Activated B cell treated with CpG ODN at 0.5 μM for 24 hours (primary cell): ENCODE measurements at regions of chr2 and their contacts with region 1.

Region 1: GRCh38 chr2:10302479-10303180 is at the start of gene HPCAL1:
- DNase-seq: peak; percentile 87
- ATAC-seq: peak; percentile 84
- H3K4me3 Mint-ChIP-seq: peak within 1 kb of the TSS; percentile 96
- H3K27ac Mint-ChIP-seq: peak within 1 kb of the TSS; percentile 80
- H3K4me1 Mint-ChIP-seq: peaks cover 58% of the 10 kb centered on the region
- H3K27me3 Mint-ChIP-seq: no peaks in the 10 kb centered on the region
- CTCF ChIP-seq: no peak
- total RNA-seq, gene HPCAL1: 15.2 and 15.9 TPM in 2 replicates

Region 2: DNA sequence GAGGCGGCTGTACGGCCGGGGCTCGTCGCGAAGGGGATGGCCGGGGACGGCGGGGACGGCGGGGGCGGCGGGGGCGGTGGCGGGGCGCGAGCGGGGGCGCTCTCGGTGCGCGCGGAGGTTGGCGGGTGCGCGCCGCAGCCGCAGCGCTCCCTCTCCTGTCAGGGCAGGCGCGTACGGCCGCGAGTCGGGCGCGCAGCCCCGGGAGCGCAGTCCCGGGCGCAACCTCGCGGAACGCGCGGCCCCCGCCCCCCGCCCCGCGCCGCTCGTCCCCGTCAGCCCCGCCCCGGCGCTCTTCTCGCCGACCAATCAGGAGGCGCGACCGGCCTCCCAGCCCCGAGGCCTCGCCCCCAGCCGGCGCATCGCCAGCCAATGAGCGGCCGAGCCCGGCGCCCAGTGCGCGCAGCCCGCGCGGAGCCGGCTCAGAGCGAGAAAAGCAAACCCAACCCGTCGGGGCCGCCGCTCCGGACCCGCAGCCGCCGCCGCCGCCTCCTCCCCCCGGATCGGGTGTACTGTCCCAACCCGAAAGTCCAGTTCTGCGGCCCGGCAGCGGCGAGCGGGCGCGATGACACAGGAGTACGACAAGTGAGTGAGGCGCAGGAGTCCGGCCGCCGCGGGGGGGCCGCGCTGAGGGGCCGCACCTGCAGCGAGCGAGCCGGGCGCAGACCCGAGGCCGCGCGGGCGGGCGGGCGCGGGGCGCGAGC is 351.2 kb before region 1 on chr2 and contains the start of gene GRHL1:
- CTCF ChIA-PET with region 1: no interaction called
- POLR2A ChIA-PET with region 1: no interaction called
- intact Hi-C with region 1: loop called (anchors 2 kb)
- DNase-seq: peak; percentile 89
- ATAC-seq: peak; percentile 96
- H3K4me3 Mint-ChIP-seq: peak within 1 kb of the TSS; percentile 84
- H3K27ac Mint-ChIP-seq: peak within 1 kb of the TSS; percentile 65
- H3K4me1 Mint-ChIP-seq: peaks cover 14% of the 10 kb centered on the region
- H3K27me3 Mint-ChIP-seq: peaks cover 37% of the 10 kb centered on the region
- CTCF ChIP-seq: no peak
- total RNA-seq, gene GRHL1: 0.39 and 0.95 TPM in 2 replicates

Region 3: GRCh38 chr2:10331027-10331701 is 28.5 kb after region 1 on chr2:
- CTCF ChIA-PET with region 1: interaction called, 3 read pairs
- POLR2A ChIA-PET with region 1: interaction called, 22 read pairs
- intact Hi-C with region 1: loop called (anchors 1 kb)
- DNase-seq: peak; percentile 31
- ATAC-seq: peak; percentile 49
- H3K4me3 Mint-ChIP-seq: peak overlapping the region; percentile 79
- H3K27ac Mint-ChIP-seq: peak overlapping the region; percentile 65
- H3K4me1 Mint-ChIP-seq: peaks cover 70% of the 10 kb centered on the region
- H3K27me3 Mint-ChIP-seq: no peaks in the 10 kb centered on the region
- CTCF ChIP-seq: no peak

Region 4: DNA sequence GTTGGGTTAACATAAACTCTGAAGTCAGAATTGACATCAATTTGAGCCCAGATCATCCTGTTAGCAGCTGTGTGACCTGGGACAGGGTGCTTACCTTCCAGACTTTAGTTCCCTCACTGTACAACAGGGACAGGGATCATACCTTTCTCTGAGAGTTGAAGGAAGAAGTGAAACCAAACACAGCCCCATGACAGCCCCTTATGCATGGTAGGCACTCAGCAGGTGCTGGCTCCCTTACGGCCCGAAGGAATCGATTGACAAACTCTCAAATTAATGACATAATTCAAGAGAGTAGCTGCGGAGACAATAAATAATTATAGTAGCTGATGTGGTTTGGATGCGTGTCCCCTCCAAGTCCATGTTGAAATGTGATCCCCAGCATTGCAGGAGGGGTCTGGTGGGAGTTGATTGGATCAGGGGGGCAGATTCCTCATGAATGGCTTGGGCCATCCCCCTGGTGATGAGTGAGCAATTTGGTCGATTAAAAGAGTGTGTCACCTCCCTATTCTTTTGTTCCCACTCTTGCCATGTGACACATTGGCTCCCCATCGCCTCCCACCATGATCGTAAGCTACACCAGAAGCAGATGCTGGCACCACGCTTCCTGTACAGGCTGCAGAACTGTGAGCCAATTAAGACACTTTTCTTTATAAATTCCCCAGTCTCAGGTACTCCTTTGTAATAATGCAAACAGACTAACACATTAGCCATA is 73.1 kb after region 1 on chr2:
- CTCF ChIA-PET with region 1: no interaction called
- POLR2A ChIA-PET with region 1: interaction called, 26 read pairs
- intact Hi-C with region 1: loop called (anchors 1 kb)
- DNase-seq: no peak
- ATAC-seq: peak; percentile 74
- H3K4me3 Mint-ChIP-seq: peak overlapping the region; percentile 59
- H3K27ac Mint-ChIP-seq: peak overlapping the region; percentile 86
- H3K4me1 Mint-ChIP-seq: peaks cover 78% of the 10 kb centered on the region
- H3K27me3 Mint-ChIP-seq: no peaks in the 10 kb centered on the region
- CTCF ChIP-seq: no peak

Region 5: GRCh38 chr2:10382354-10383061 is 79.9 kb after region 1 on chr2:
- CTCF ChIA-PET with region 1: interaction called, 5 read pairs
- POLR2A ChIA-PET with region 1: interaction called, 33 read pairs
- intact Hi-C with region 1: loop called (anchors 1 kb)
- DNase-seq: peak; percentile 46
- ATAC-seq: peak; percentile 64
- H3K4me3 Mint-ChIP-seq: peak overlapping the region; percentile 58
- H3K27ac Mint-ChIP-seq: peak overlapping the region; percentile 59
- H3K4me1 Mint-ChIP-seq: peaks cover 91% of the 10 kb centered on the region
- H3K27me3 Mint-ChIP-seq: no peaks in the 10 kb centered on the region
- CTCF ChIP-seq: no peak